IMR-90 (cell line): ENCODE measurements at regions of chr9 and their contacts with region 1.

Region 1: GRCh38 chr9:85940832-85941621 is at the start of gene NAA35:
- DNase-seq: peak; percentile 97
- ATAC-seq: peak; percentile 95
- H3K4me3 ChIP-seq: peak within 1 kb of the TSS; percentile 83
- H3K27ac ChIP-seq: peak within 1 kb of the TSS; percentile 66
- H3K4me1 ChIP-seq: no peaks in the 10 kb centered on the region
- H3K27me3 ChIP-seq: no peaks in the 10 kb centered on the region
- CTCF ChIP-seq: no peak
- POLR2A ChIP-seq: 0 out of 2 replicates have a peak, but pooled peaks have one; percentile 59
- RAD21 ChIP-seq: no peak
- total RNA-seq, gene NAA35: 16.5 and 23.9 TPM in 2 replicates

Region 2: DNA sequence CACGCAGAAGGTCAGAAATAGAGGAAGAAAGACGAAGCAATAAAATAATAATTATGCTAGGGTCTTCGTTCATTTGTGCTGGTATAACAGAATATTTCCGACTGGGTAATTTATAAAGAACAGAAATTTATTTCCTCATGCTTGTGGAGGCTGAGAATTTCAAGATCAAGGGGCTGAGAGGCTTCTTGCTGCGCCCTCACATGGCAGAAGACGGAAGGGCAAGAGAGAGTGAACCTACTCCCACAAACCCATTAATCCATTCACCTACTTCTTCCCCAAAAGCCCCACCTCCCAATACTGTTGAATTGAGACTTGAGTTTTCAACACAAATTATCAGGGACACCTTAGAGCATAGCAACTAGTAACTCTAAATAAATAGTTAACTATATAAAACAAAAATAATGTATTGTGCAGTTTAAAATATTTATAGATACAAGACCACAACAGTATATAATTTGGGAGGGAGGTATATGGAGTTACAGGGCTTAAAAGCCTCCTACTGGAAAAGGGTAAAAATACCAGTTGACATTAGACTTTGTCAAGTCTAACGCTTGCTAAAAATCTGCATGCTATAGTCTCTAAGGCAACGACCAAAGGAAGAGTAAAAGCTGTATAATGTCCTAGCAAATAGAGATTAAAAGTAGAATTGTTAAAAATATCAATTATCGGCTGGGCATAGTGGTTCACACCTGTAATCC is 40.4 kb before region 1 on chr9:
- CTCF ChIA-PET with region 1: no interaction called
- POLR2A ChIA-PET with region 1: no interaction called
- dilution Hi-C with region 1: no loop called
- in situ Hi-C with region 1: no loop called
- intact Hi-C with region 1: loop called (anchors 5 kb)
- DNase-seq: peak; percentile 36
- ATAC-seq: peak; percentile 75; the same call in 1 of the 2 replicates
- H3K4me3 ChIP-seq: no peak overlapping the region
- H3K27ac ChIP-seq: no peak overlapping the region
- H3K4me1 ChIP-seq: no peaks in the 10 kb centered on the region
- H3K27me3 ChIP-seq: no peaks in the 10 kb centered on the region; the same call in 1 of the 2 replicates
- CTCF ChIP-seq: peak; percentile 52
- POLR2A ChIP-seq: no peak
- RAD21 ChIP-seq: peak; percentile 40